ENCODE measurements at regions of chr17 and their contacts with region 1.

Region 1: GRCh38 chr17:75289115-75289831 is at the start of gene SLC25A19:
- DNase-seq: peak; percentile 98
- H3K4me3 Mint-ChIP-seq: peak within 1 kb of the TSS; percentile 98
- H3K27ac Mint-ChIP-seq: peak within 1 kb of the TSS; percentile 97
- H3K4me1 Mint-ChIP-seq: peaks cover 7% of the 10 kb centered on the region
- H3K27me3 Mint-ChIP-seq: no peaks in the 10 kb centered on the region
- CTCF ChIP-seq: no peak
- total RNA-seq, gene SLC25A19: 14.8 and 22.6 TPM in 2 replicates

Region 2: GRCh38 chr17:75261336-75262111 is 27.7 kb before region 1 on chr17 and contains the starts of genes GGA3 and MRPS7:
- CTCF ChIA-PET with region 1: interaction called, 5 read pairs
- POLR2A ChIA-PET with region 1: interaction called, 61 read pairs
- intact Hi-C with region 1: no loop called
- DNase-seq: peak; percentile 94
- H3K4me3 Mint-ChIP-seq: peak within 1 kb of the TSS; percentile 100
- H3K27ac Mint-ChIP-seq: peak within 1 kb of the TSS; percentile 100
- H3K4me1 Mint-ChIP-seq: peaks cover 46% of the 10 kb centered on the region
- H3K27me3 Mint-ChIP-seq: no peaks in the 10 kb centered on the region
- CTCF ChIP-seq: no peak
- total RNA-seq, gene GGA3: 32.7 and 39.5 TPM in 2 replicates
- total RNA-seq, gene MRPS7: 73.9 and 75.0 TPM in 2 replicates

Region 3: GRCh38 chr17:75277664-75278071 is 11.6 kb before region 1 on chr17:
- CTCF ChIA-PET with region 1: interaction called, 4 read pairs
- POLR2A ChIA-PET with region 1: interaction called, 96 read pairs
- intact Hi-C with region 1: no loop called
- DNase-seq: no peak
- H3K4me3 Mint-ChIP-seq: peak overlapping the region; percentile 27
- H3K27ac Mint-ChIP-seq: peak overlapping the region; percentile 88
- H3K4me1 Mint-ChIP-seq: peaks cover 19% of the 10 kb centered on the region
- H3K27me3 Mint-ChIP-seq: no peaks in the 10 kb centered on the region
- CTCF ChIP-seq: no peak

Region 4: GRCh38 chr17:75319904-75320691 is 30.8 kb after region 1 on chr17:
- CTCF ChIA-PET with region 1: interaction called, 6 read pairs
- POLR2A ChIA-PET with region 1: interaction called, 12 read pairs
- intact Hi-C with region 1: no loop called
- DNase-seq: no peak
- H3K4me3 Mint-ChIP-seq: no peak overlapping the region
- H3K27ac Mint-ChIP-seq: no peak overlapping the region
- H3K4me1 Mint-ChIP-seq: no peaks in the 10 kb centered on the region
- H3K27me3 Mint-ChIP-seq: no peaks in the 10 kb centered on the region
- CTCF ChIP-seq: no peak

Region 5: GRCh38 chr17:75412455-75413317 is 123.4 kb after region 1 on chr17:
- CTCF ChIA-PET with region 1: interaction called, 5 read pairs
- POLR2A ChIA-PET with region 1: no interaction called
- intact Hi-C with region 1: loop called (anchors 1 kb)
- DNase-seq: peak; percentile 74
- H3K4me3 Mint-ChIP-seq: peak overlapping the region; percentile 35
- H3K27ac Mint-ChIP-seq: peak overlapping the region; percentile 76
- H3K4me1 Mint-ChIP-seq: peaks cover 11% of the 10 kb centered on the region
- H3K27me3 Mint-ChIP-seq: peaks cover 30% of the 10 kb centered on the region
- CTCF ChIP-seq: peak; percentile 82